ENCODE measurements at regions of chr4 and their contacts with region 1.

Region 1: GRCh38 chr4:20422398-20422797 is 170.7 kb downstream of the SLIT2 start:
- DNase-seq: peak; percentile 75 to 78
- H3K4me3 ChIP-seq: no peak overlapping the region
- H3K4me1 ChIP-seq: peaks cover 2% of the 10 kb centered on the region; the same call in 1 of the 2 replicates
- H3K27me3 ChIP-seq: no peaks in the 10 kb centered on the region

Region 2: DNA sequence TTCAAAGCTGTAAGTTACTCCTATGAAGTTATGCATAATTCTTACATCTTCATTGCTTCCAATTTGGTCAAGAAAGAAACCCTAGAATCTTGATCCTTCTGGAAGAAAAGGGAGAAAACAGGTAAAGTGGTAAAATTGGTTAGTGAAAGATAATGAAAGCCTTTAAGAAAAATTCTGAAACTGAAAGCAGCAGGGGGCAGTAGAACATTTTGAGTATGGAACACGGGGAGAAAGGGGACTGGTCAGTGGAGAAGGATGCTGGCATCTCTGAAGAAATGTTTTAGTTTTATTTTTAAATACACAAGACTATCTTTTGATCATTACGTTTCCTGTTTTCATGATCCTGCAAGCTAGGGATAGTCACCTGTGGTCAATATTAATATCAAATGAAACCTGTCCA is 116.4 kb before region 1 on chr4:
- in situ Hi-C with region 1: loop called (anchors 10 kb)
- DNase-seq: peak; percentile 67 to 68
- H3K4me3 ChIP-seq: no peak overlapping the region
- H3K4me1 ChIP-seq: peaks cover 4% of the 10 kb centered on the region; the same call in 1 of the 2 replicates
- H3K27me3 ChIP-seq: no peaks in the 10 kb centered on the region

Region 3: GRCh38 chr4:20544645-20545044 is 122.2 kb after region 1 on chr4:
- in situ Hi-C with region 1: loop called (anchors 10 kb)
- DNase-seq: peak in 1 of 2 experiments; percentile 67
- H3K4me3 ChIP-seq: no peak overlapping the region
- H3K4me1 ChIP-seq: no peaks in the 10 kb centered on the region
- H3K27me3 ChIP-seq: no peaks in the 10 kb centered on the region

Region 4: GRCh38 chr4:20684852-20685763 is 262.7 kb after region 1 on chr4:
- in situ Hi-C with region 1: loop called (anchors 10 kb)
- DNase-seq: peak in 1 of 2 experiments; percentile 48
- H3K4me3 ChIP-seq: no peak overlapping the region
- H3K4me1 ChIP-seq: no peaks in the 10 kb centered on the region
- H3K27me3 ChIP-seq: peaks cover 23% of the 10 kb centered on the region

Region 5: DNA sequence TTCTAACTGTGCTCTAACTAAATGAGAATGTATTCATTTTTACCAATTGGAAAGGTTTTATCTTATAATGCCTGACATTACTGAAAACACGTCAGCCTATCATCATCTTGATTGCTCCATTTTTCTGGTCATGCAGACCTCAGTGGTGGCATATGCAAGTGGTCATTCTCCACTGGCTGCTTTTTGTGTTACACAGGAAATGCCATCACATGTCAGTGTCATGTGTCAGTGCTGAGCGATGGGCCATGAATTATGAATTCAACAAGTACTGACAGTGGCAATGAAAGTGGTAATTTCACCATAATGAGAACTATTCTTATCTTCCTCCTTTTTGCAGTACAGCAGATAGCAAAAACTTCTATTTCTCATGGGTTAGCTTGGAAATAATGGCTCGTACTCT is 468.4 kb after region 1 on chr4:
- in situ Hi-C with region 1: no loop called
- DNase-seq: no peak
- H3K4me3 ChIP-seq: no peak overlapping the region
- H3K4me1 ChIP-seq: no peaks in the 10 kb centered on the region
- H3K27me3 ChIP-seq: 0 out of 2 replicates have a peak, but pooled peaks cover 2% of the 10 kb centered on the region

Measured in HAP-1 (cell line).